ENCODE measurements at regions of chr1 and their contacts with region 1.

Region 1: GRCh38 chr1:203649999-203650855 is 23.6 kb downstream of the ATP2B4 start:
- DNase-seq: peak; percentile 81
- H3K4me3 Mint-ChIP-seq: peak overlapping the region; percentile 70
- H3K27ac Mint-ChIP-seq: peak overlapping the region; percentile 90
- H3K4me1 Mint-ChIP-seq: peaks cover 72% of the 10 kb centered on the region
- H3K27me3 Mint-ChIP-seq: no peaks in the 10 kb centered on the region

Region 2: DNA sequence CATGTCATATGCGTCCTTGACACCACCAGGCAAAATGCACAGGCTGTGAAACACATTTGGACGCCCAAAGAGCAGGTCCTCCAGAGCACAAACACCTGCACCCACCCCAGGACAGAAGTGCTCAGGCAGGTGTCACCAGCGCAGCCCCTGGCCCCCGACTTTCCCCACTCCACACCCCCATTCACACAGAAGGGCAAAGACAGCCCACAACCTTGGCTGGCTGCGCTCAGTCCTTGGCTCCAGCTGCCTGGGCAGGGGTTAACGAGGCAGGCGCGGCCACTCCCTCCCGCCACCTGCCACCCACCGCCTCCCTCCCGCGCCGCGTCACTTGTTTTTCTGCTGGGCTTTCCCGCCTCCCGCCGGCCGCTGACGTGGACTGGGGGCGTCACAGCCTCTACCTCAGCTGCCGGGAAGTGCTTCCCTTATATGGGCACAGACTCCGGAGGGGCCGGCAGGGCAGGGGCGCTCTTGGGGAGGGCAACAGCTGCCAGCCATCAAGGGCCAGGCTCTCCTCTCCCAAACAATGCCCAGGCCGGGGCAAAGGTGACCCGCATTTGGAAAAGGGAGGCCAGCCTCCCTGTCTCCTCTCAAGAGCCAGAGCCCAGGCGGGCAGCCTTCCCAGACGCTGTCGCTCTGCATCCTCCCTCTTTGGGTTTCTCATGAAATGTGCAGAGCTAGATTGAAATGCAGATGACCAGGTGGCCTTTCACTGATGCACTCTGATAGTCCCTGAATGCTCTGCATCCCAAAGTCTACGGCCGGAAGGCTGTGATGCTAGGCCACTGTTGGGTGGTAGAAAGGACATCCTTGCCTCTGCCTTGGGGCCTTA is 359.8 kb before region 1 on chr1:
- CTCF ChIA-PET with region 1: no interaction called
- POLR2A ChIA-PET with region 1: interaction called, 5 read pairs
- intact Hi-C with region 1: loop called (anchors 2 kb)
- DNase-seq: peak; percentile 99
- H3K4me3 Mint-ChIP-seq: peak overlapping the region; percentile 82
- H3K27ac Mint-ChIP-seq: peak overlapping the region; percentile 100
- H3K4me1 Mint-ChIP-seq: peaks cover 76% of the 10 kb centered on the region
- H3K27me3 Mint-ChIP-seq: peaks cover 2% of the 10 kb centered on the region

Region 3: GRCh38 chr1:203428981-203429599 is 221.1 kb before region 1 on chr1:
- CTCF ChIA-PET with region 1: no interaction called
- POLR2A ChIA-PET with region 1: no interaction called
- intact Hi-C with region 1: no loop called
- DNase-seq: no peak
- H3K4me3 Mint-ChIP-seq: no peak overlapping the region
- H3K27ac Mint-ChIP-seq: no peak overlapping the region
- H3K4me1 Mint-ChIP-seq: no peaks in the 10 kb centered on the region
- H3K27me3 Mint-ChIP-seq: peaks cover 27% of the 10 kb centered on the region

Region 4: GRCh38 chr1:203609979-203610493 is 40.2 kb before region 1 on chr1:
- CTCF ChIA-PET with region 1: interaction called, 5 read pairs
- POLR2A ChIA-PET with region 1: interaction called, 5 read pairs
- intact Hi-C with region 1: loop called (anchors 1 kb)
- DNase-seq: no peak
- H3K4me3 Mint-ChIP-seq: no peak overlapping the region
- H3K27ac Mint-ChIP-seq: peak overlapping the region; percentile 53
- H3K4me1 Mint-ChIP-seq: peaks cover 58% of the 10 kb centered on the region
- H3K27me3 Mint-ChIP-seq: no peaks in the 10 kb centered on the region

Region 5: GRCh38 chr1:203673550-203674427 is 23.6 kb after region 1 on chr1:
- CTCF ChIA-PET with region 1: interaction called, 17 read pairs
- POLR2A ChIA-PET with region 1: interaction called, 36 read pairs
- intact Hi-C with region 1: loop called (anchors 1 kb)
- DNase-seq: peak; percentile 84
- H3K4me3 Mint-ChIP-seq: peak overlapping the region; percentile 46
- H3K27ac Mint-ChIP-seq: peak overlapping the region; percentile 90
- H3K4me1 Mint-ChIP-seq: peaks cover 62% of the 10 kb centered on the region
- H3K27me3 Mint-ChIP-seq: no peaks in the 10 kb centered on the region

Region 6: GRCh38 chr1:203692565-203693470 is 42.6 kb after region 1 on chr1:
- CTCF ChIA-PET with region 1: interaction called, 3 read pairs
- POLR2A ChIA-PET with region 1: interaction called, 4 read pairs
- intact Hi-C with region 1: loop called (anchors 2 kb)
- DNase-seq: peak; percentile 48
- H3K4me3 Mint-ChIP-seq: no peak overlapping the region
- H3K27ac Mint-ChIP-seq: peak overlapping the region; percentile 78
- H3K4me1 Mint-ChIP-seq: peaks cover 46% of the 10 kb centered on the region
- H3K27me3 Mint-ChIP-seq: no peaks in the 10 kb centered on the region

Region 7: DNA sequence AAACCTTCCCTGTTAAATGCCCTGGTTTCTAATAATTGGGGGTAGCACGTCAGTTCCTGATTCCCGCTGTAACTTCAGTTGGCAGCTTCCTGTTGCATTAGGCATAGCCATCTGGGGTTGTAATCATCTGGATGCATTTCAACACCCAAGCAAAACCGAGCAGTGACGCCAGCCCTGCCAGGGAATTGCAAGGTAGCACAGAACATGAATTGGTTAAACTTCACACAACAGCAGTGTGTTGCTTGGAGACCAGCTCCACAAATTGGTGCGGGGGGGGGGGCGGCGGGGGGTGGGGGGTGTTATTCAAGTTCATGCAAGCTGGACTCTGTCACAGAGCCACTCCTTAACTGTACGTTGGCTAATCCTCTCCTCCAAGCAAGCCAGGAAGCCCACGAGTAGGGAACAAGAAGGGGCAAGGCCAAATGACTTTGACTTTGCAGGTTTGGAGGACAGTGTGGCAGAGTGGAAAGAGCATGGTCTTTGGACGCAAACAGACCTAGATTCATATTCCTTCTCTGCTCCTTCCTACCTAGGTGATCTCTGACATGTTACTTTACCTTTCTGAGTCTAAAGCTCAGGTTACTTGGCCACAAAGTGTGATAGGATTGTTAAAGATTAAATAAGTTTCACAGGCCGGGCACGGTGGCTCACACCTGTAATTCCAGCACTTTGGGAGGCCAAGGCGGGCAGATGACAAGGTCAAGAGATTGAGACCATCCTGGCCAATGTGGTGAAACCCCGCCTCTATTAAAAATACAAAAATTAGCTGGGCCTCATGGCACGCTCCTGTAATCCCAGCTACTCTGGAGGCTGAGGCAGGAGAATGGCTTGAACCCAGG is 119.5 kb after region 1 on chr1:
- CTCF ChIA-PET with region 1: interaction called, 4 read pairs
- POLR2A ChIA-PET with region 1: interaction called, 7 read pairs
- intact Hi-C with region 1: loop called (anchors 1 kb)
- DNase-seq: no peak
- H3K4me3 Mint-ChIP-seq: no peak overlapping the region
- H3K27ac Mint-ChIP-seq: no peak overlapping the region
- H3K4me1 Mint-ChIP-seq: peaks cover 17% of the 10 kb centered on the region
- H3K27me3 Mint-ChIP-seq: no peaks in the 10 kb centered on the region